Activated CD4-positive, alpha-beta T cell treated with anti-CD3 and anti-CD28 coated beads for 36 hours (primary cell): ENCODE measurements at regions of chr3 and their contacts with region 1.

Region 1: DNA sequence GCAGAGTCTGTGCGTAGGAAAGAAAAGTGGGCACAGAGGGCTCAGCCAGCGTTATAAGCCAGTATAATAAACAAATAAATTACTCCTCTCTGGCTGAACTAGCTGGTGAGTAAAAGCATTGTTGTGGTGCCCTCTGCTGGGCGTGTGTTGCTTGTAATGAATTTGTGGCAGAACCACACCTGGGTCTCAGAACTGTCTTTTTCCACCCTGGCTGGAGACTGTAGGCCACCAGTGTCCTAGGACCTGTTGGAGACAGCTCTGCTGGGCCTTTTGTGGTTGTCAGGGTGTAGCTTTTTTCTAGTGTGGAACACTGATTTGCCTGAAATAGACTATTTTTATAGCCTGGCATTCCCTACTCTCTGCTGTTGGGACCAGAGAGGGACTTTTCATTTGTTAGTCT is 130.5 kb upstream of the EIF1B start:
- DNase-seq: peak; percentile 81
- ATAC-seq: peak; percentile 53
- H3K4me3 Mint-ChIP-seq: no peak overlapping the region
- H3K27ac Mint-ChIP-seq: no peak overlapping the region
- H3K4me1 Mint-ChIP-seq: no peaks in the 10 kb centered on the region
- H3K27me3 Mint-ChIP-seq: no peaks in the 10 kb centered on the region

Region 2: GRCh38 chr3:39414421-39414907 is 764.6 kb before region 1 on chr3:
- CTCF ChIA-PET with region 1: no interaction called
- POLR2A ChIA-PET with region 1: no interaction called
- intact Hi-C with region 1: loop called in 1 of 2 experiments (anchors 10 kb)
- DNase-seq: peak; percentile 18
- ATAC-seq: peak; percentile 24
- H3K4me3 Mint-ChIP-seq: no peak overlapping the region
- H3K27ac Mint-ChIP-seq: peak overlapping the region; percentile 58
- H3K4me1 Mint-ChIP-seq: peaks cover 25% of the 10 kb centered on the region
- H3K27me3 Mint-ChIP-seq: peaks cover 3% of the 10 kb centered on the region

Region 3: GRCh38 chr3:39447637-39448483 is 731.2 kb before region 1 on chr3:
- CTCF ChIA-PET with region 1: interaction called, 3 read pairs
- POLR2A ChIA-PET with region 1: no interaction called
- intact Hi-C with region 1: loop called in 1 of 2 experiments (anchors 2 kb)
- DNase-seq: peak; percentile 72
- ATAC-seq: peak; percentile 86
- H3K4me3 Mint-ChIP-seq: no peak overlapping the region
- H3K27ac Mint-ChIP-seq: no peak overlapping the region
- H3K4me1 Mint-ChIP-seq: no peaks in the 10 kb centered on the region
- H3K27me3 Mint-ChIP-seq: peaks cover 3% of the 10 kb centered on the region

Region 4: DNA sequence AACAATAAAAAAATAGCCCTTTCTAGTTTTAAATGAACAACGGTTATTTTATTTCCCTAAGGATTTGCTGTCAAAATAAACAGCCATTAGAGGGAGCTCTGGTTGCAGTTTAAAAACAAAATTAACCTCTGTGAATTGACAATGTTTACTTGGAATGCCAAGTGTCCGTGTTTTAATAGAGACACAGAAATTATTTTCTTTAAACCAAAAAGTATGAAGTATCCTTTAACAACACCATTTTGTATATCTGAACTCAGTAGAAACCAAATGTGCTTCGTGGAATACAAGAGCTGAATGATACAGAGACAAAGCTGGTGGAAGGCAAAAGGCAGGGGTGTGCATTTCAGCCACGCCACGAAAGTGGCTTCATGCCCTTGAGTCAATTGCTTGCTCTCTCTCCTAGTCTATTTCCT is 637.1 kb before region 1 on chr3:
- CTCF ChIA-PET with region 1: interaction called, 5 read pairs
- POLR2A ChIA-PET with region 1: no interaction called
- intact Hi-C with region 1: loop called in 1 of 2 experiments (anchors 10 kb)
- DNase-seq: no peak
- ATAC-seq: no peak
- H3K4me3 Mint-ChIP-seq: no peak overlapping the region
- H3K27ac Mint-ChIP-seq: no peak overlapping the region
- H3K4me1 Mint-ChIP-seq: peaks cover 11% of the 10 kb centered on the region
- H3K27me3 Mint-ChIP-seq: peaks cover 9% of the 10 kb centered on the region

Region 5: GRCh38 chr3:39707314-39707909 is 471.6 kb before region 1 on chr3:
- CTCF ChIA-PET with region 1: interaction called, 8 read pairs
- POLR2A ChIA-PET with region 1: no interaction called
- intact Hi-C with region 1: loop called (anchors 1 to 5 kb)
- DNase-seq: no peak
- ATAC-seq: no peak
- H3K4me3 Mint-ChIP-seq: no peak overlapping the region
- H3K27ac Mint-ChIP-seq: no peak overlapping the region
- H3K4me1 Mint-ChIP-seq: no peaks in the 10 kb centered on the region
- H3K27me3 Mint-ChIP-seq: peaks cover 3% of the 10 kb centered on the region

Region 6: DNA sequence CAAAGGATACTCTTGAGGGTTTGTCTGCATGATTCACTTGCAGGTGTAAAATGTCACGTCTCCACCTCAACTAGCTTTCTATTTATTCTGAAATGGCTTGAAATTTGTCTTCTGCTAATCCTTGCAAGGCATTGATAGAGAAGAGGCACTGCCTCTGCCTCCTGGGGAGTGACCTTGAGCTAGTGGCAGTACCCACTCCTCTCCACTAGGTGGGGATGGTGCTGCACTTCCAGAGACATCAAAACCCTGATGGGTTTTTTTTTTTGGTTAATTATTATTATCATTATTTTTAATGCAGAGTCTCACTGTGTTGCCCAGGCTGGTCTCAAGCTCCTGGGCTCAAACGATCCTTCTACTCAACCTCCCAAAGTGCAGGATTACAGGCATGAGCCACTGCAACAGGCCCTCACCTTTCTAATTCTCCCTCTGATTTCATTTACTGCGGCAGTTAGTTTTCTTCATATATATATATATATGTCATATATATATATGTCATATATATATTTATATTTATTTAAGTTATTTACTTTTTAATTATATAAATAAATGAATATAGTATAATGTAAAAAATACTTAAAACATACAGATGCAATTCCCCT is 12.9 kb after region 1 on chr3:
- CTCF ChIA-PET with region 1: interaction called, 23 read pairs
- POLR2A ChIA-PET with region 1: no interaction called
- intact Hi-C with region 1: no loop called
- DNase-seq: peak; percentile 72
- ATAC-seq: peak; percentile 57
- H3K4me3 Mint-ChIP-seq: no peak overlapping the region
- H3K27ac Mint-ChIP-seq: no peak overlapping the region
- H3K4me1 Mint-ChIP-seq: no peaks in the 10 kb centered on the region
- H3K27me3 Mint-ChIP-seq: no peaks in the 10 kb centered on the region